Activated CD4-positive, alpha-beta T cell treated with anti-CD3 and anti-CD28 coated beads, Interleukin-2, amount 10 ng/mL, durations not matched to agents 24 days and 14 days (primary cell): ENCODE measurements at regions of chr1 and their contacts with region 1.

Region 1: DNA sequence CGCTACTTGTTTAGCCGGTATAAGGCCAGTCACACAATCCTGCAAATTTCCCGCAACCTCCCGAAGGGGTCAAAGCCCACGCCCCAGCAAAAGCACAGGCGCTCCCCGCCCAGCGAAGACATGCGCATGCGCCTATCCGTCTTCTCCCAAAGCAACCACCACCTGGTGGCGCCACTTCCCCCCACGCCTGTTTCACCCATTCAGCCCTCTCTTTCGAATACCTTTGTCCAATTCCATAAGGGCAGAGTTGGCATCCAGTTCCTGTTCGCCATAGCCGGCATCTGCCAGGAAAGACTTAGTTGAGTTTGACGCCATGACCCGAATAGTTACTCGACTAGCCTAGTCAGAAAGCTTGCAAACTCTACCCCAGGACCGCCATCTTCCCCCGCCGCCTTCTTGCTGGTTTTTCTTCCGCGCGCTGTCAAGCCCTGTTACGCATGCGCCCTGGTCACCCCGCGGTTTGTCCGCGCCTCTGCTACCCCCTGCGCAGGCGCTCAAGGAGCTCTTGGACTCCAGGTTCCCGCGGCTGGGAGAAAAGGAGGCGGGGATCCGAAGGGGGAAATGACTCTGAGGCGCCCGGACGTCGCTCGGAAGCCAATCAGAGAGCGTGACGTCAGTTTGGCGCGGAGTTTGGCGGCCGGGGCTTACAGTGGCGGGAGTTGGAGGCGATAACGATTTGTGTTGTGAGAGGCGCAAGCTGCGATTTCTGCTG is at the starts of genes DTL and INTS7:
- DNase-seq: peak; percentile 100
- H3K4me3 Mint-ChIP-seq: peak within 1 kb of the TSS; percentile 98
- H3K27ac Mint-ChIP-seq: peak within 1 kb of the TSS; percentile 99
- H3K4me1 Mint-ChIP-seq: peaks cover 60% of the 10 kb centered on the region
- H3K27me3 Mint-ChIP-seq: peaks cover 3% of the 10 kb centered on the region
- total RNA-seq, gene DTL: 90.4 and 99.5 TPM in 2 replicates
- total RNA-seq, gene INTS7: 34.4 and 36.8 TPM in 2 replicates

Region 2: GRCh38 chr1:211675230-211676105 is 359.8 kb before region 1 on chr1 and contains the start of gene NEK2:
- intact Hi-C with region 1: loop called (anchors 1 kb)
- DNase-seq: peak; percentile 97
- H3K4me3 Mint-ChIP-seq: peak within 1 kb of the TSS; percentile 97
- H3K27ac Mint-ChIP-seq: peak within 1 kb of the TSS; percentile 85
- H3K4me1 Mint-ChIP-seq: peaks cover 28% of the 10 kb centered on the region
- H3K27me3 Mint-ChIP-seq: peaks cover 7% of the 10 kb centered on the region
- total RNA-seq, gene NEK2: 18.0 and 18.2 TPM in 2 replicates

Region 3: DNA sequence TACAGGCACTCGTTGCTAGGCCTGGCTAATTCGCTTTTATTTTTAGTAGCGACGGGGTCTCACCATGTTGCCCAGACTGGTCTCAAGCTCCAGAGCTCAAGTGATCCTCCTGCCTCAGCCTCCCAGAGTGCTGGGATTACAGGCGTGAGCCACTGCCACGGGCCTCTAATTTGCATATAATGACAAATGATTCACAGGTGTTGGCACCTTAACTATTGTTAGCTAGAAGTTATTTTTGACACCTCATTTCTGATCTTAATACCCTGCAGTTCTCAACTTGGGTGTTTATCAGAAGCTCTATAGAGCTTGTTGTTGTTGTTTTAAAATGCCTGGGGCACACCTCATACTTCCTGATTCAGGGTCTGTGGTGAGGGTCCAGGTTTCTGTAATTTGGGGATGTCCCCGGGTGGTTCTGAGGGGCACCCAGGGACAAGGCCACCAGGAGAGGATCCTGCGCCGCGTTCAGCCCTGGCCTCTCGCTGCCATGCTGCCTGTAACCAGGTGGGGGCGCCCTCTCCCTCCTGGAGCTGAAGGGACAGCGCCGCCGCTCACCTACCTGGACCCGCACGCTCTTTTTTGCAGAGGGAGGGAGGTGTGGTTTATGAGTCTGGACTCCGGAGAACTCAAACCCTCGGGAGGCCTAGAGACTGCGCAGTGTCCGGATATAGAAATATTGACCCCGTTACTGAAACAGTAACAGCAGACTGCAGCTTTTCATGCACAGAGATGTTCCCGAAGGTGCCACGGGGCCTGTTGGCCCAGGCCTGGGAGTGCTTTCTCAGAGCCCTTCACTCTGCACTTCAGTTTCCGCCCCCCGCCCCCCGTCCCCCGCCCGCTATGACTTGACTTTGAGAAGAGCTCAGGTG is 336.9 kb before region 1 on chr1:
- intact Hi-C with region 1: loop called (anchors 5 kb)
- DNase-seq: peak; percentile 96
- H3K4me3 Mint-ChIP-seq: peak overlapping the region; percentile 63
- H3K27ac Mint-ChIP-seq: no peak overlapping the region
- H3K4me1 Mint-ChIP-seq: peaks cover 30% of the 10 kb centered on the region
- H3K27me3 Mint-ChIP-seq: peaks cover 20% of the 10 kb centered on the region

Region 4: DNA sequence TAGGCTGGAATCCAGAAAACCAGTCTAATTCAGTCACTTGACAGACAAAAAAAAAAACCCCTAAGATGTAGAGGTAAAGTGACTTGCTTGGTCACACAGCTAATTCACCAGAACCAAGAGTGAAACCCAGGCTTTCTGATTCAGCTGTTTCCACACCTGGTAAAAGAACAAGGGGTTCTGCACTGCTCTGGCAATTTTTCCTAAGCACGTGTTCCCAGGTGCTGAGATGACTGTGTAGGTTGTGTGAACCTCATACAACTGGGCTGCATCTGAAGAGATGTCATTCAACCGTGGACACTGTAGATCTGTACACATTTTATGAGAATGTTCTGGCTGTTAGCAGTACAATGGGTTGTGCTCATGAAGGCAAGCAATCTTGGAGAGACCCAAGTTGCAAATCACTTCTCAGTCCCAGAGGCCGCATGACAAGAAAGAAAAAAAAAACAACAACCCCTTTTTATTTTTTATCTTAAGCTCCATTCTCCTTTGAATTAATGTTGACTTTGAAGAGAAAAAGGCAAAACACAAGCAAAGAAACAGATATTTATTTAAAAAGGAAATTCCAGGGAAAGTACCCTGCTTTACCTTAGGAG is 95.3 kb before region 1 on chr1:
- intact Hi-C with region 1: loop called (anchors 1 kb)
- DNase-seq: peak; percentile 79
- H3K4me3 Mint-ChIP-seq: peak overlapping the region; percentile 26
- H3K27ac Mint-ChIP-seq: peak overlapping the region; percentile 34
- H3K4me1 Mint-ChIP-seq: peaks cover 35% of the 10 kb centered on the region
- H3K27me3 Mint-ChIP-seq: no peaks in the 10 kb centered on the region

Region 5: DNA sequence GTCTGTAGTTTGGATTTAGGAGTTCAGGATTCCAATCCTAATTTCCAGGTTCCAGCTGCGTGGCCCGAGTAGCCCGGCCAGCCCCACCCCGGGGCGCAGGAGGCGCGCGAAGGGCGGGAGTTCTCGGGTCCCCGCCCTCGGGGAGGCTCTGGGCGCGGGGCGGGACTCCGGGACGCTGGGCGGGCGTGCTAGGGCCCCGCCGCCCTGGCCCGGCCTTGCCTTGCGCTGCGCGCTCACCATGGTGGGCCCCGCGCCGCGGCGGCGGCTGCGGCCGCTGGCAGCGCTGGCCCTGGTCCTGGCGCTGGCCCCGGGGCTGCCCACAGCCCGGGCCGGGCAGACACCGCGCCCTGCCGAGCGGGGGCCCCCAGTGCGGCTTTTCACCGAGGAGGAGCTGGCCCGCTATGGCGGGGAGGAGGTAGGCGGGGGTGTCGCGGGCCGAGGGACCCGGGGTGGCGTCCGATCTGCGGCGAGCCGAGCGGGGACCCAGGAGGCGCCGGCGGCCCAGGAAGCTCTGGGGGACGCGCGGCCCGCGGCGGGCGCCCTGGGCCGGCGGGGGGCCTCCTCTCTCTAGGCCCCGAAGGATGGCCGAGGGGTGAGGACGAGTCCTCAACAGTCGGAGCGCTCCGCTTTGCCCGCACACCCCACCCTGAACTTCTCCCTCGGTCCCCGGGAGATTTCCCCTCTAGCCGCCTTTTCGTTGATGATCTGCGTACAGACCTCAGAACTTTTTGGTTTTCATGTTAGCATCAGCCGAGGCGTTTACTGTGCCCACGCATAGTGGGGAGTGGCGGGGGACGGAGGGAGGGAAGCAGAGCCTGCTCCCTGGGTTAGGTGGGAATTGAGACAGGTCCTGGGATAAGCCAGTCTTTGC is 397.7 kb after region 1 on chr1 and contains the start of gene NENF:
- intact Hi-C with region 1: loop called (anchors 5 kb)
- DNase-seq: peak; percentile 95
- H3K4me3 Mint-ChIP-seq: peak within 1 kb of the TSS; percentile 82
- H3K27ac Mint-ChIP-seq: peak within 1 kb of the TSS; percentile 76
- H3K4me1 Mint-ChIP-seq: peaks cover 32% of the 10 kb centered on the region
- H3K27me3 Mint-ChIP-seq: peaks cover 2% of the 10 kb centered on the region
- total RNA-seq, gene NENF: 35.1 and 36.1 TPM in 2 replicates